Dorsolateral prefrontal cortex (tissue), 120 donors: ENCODE measurements at regions of chr16 and their contacts with region 1.

Region 1: GRCh38 chr16:22077700-22078313 is 14.5 kb upstream of the VWA3A start:
- DNase-seq: peak in 7 of 10 donors; percentile 44 to 80 (median 57)
- H3K4me3 ChIP-seq: no peak overlapping the region
- H3K27ac ChIP-seq: peak overlapping the region in 2 of 59 donors; percentile 13 to 20
- H3K27me3 ChIP-seq: no peaks in the 10 kb centered on the region
- CTCF ChIP-seq: peak; percentile 60 to 91 (median 80)

Region 2: DNA sequence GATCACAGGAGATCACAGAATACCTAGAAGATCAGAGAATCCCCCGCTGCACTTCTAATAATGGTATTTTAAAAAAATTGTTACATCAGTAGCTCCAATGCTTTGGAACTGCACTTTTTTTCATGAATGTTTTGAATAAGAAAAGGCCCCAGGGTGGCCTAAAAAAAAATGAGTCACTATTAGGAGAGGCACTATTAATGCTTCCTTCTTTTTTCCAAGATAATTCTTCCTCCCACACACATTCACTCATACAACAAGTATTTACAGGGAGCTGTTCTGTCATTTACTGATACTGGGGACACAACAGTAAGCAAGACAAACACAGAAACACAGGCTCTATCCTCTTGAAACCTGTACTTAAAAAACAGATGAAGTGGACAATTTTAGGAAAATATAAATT is 76.2 kb before region 1 on chr16:
- intact Hi-C with region 1: loop called (anchors 2 kb)
- DNase-seq: no peak
- H3K4me3 ChIP-seq: peak overlapping the region in 6 of 59 donors; percentile 37 to 54 (median 44)
- H3K27ac ChIP-seq: no peak overlapping the region
- H3K27me3 ChIP-seq: no peaks in the 10 kb centered on the region
- CTCF ChIP-seq: no peak